Activated T-helper 2 cell treated with anti-CD3 and anti-CD28 coated beads, Interferon-gamma antibody, Interleukin-2, Interleukin-4, amounts not matched to agents 10 μg/mL and 5 μg/mL and 100 μg/mL, durations not matched to agents 14 hours and 24 hours and 36 hours (primary cell): ENCODE measurements at regions of chr12 and their contacts with region 1.

Region 1: DNA sequence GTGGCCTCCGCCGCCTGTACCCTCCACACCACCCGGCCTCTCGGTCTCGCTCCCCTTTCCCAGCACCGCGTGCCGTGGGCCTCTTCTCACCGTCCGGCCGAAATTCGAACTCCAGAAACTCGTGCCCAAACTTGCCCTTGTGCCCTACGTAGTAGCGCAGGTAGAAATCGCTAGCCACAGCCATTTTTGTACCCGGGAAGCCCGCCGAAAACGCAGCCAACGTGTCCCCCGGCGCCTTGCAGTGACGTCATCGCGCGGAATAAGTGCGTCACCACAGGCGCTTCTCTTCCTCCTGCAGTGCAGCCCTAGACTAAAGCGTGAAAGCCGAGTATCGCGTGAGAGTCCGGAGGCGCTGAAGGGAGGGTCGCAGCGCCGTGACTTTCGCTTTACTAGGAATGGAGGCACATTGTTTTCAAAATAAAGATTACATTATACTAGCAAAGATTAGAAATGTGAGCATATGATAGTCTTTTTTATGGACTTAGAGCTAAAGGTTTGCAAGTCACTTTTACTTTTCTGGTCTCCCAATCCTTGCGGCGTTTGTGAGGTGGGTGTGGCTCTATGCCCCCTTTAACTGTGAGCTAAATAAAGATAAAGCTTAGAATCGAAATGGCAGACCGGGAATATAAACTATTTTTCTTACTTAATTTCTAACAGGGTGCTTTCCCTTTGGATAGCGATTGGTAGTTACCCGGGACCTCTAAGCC is at the start of gene MAGOHB:
- DNase-seq: peak; percentile 97
- H3K4me3 Mint-ChIP-seq: peak within 1 kb of the TSS; percentile 100
- H3K27ac Mint-ChIP-seq: peak within 1 kb of the TSS; percentile 100
- H3K4me1 Mint-ChIP-seq: peaks cover 27% of the 10 kb centered on the region
- H3K27me3 Mint-ChIP-seq: peaks cover 11% of the 10 kb centered on the region
- total RNA-seq, gene MAGOHB: 69.4 and 70.2 TPM in 2 replicates

Region 2: GRCh38 chr12:9948606-9949296 is 664.8 kb before region 1 on chr12:
- intact Hi-C with region 1: loop called (anchors 5 kb)
- DNase-seq: no peak
- H3K4me3 Mint-ChIP-seq: peak overlapping the region; percentile 23
- H3K27ac Mint-ChIP-seq: peak overlapping the region; percentile 53
- H3K4me1 Mint-ChIP-seq: peaks cover 57% of the 10 kb centered on the region
- H3K27me3 Mint-ChIP-seq: no peaks in the 10 kb centered on the region

Region 3: DNA sequence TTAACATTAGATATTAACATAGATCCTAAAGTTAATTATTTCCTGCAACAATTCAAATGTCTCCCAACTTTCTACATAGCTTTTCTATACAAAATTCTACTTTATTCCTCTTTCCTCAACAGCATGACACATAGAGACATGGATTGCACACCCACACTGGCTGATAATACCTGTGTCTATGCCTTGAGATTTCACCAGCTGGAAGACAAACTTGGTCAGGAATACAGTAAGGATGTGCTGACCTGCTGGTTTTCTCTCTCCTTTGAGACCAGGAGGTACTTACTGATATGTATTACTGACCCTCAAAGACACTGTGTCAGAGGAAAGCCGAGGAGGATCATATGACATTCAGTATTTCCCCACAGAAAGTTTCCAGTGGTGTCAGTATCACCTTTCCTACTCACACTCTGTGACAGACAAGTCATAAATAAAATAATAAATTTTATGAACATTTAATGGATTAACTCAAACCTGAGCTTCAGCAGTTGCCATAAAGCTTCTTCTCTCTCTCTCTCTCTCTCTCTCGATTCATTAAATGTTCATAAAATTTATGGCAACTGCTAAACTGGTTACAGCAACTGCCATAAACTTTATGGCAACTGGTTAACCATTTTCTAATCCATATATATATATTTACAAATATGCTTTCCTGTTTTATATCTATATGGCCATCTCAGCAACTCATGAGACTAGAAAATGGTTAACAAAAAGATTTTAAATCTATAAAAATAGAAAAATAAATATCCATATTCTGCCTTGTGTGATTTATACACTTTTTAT is 85.1 kb before region 1 on chr12:
- intact Hi-C with region 1: no loop called
- DNase-seq: no peak
- H3K4me3 Mint-ChIP-seq: no peak overlapping the region
- H3K27ac Mint-ChIP-seq: no peak overlapping the region
- H3K4me1 Mint-ChIP-seq: no peaks in the 10 kb centered on the region
- H3K27me3 Mint-ChIP-seq: peaks cover 19% of the 10 kb centered on the region

Region 4: DNA sequence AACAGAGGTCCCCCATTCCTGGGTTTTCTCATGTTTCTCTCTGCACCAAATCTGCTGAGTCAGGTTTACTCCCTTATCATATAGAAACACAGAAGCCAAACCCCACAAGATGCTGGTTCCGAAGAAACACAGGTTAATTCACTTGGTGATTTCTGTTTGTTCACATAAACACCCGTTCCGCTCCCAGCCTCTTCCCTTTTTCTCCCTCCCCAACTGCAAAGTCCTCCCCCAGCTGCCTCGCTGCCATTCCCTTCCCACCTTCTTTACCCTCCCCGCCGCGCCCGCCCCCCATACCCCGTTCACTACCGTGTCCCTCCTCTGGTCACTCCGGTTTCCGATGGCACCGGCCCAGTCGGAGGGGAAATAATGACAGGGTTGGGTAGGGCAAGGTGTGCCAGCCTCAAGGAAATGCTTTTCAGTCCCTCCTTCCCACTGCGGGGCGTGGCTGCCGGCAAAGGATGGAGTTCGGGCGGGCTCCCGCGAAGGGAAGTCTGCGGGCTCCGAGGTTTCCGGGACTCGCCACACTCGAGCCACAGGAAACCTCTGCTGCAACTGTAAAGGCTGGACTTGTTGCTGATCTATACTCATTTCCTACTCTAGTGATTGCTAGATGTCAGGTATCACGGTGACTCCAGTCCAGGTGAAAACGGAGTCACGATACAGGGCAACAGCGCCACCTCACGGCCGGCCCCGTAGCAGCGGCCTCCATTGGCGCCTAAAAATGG is 60.3 kb after region 1 on chr12 and contains the start of gene STYK1:
- intact Hi-C with region 1: loop called (anchors 5 kb)
- DNase-seq: peak; percentile 71
- H3K4me3 Mint-ChIP-seq: peak within 1 kb of the TSS; percentile 70
- H3K27ac Mint-ChIP-seq: no peak within 1 kb of the TSS
- H3K4me1 Mint-ChIP-seq: peaks cover 39% of the 10 kb centered on the region
- H3K27me3 Mint-ChIP-seq: peaks cover 67% of the 10 kb centered on the region
- total RNA-seq, gene STYK1: not detected in 2 replicates

Region 5: GRCh38 chr12:10749700-10750384 is 136.3 kb after region 1 on chr12:
- intact Hi-C with region 1: loop called (anchors 2 kb)
- DNase-seq: peak; percentile 60
- H3K4me3 Mint-ChIP-seq: peak overlapping the region; percentile 38
- H3K27ac Mint-ChIP-seq: no peak overlapping the region
- H3K4me1 Mint-ChIP-seq: peaks cover 10% of the 10 kb centered on the region
- H3K27me3 Mint-ChIP-seq: peaks cover 43% of the 10 kb centered on the region

Region 6: DNA sequence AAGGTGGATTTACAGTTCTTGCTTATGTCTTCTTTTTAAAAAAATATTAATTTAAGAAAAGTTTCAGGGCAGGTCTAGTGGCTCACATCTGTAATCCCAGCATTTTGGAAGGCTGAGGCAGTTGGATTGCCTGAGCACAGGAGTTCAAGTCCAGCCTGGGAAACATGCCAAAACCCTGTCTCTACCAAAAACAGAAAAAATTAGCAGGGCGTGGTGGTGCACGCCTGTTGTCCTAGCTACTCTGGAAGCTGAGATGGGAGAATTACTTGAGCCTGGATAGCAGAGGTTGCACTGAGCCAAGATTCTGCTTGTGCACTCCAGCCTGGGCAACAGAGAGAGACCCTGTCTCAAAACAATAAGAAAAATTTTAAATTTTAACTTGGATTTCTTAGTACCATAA is 454.0 kb after region 1 on chr12:
- intact Hi-C with region 1: no loop called
- DNase-seq: no peak
- H3K4me3 Mint-ChIP-seq: no peak overlapping the region
- H3K27ac Mint-ChIP-seq: no peak overlapping the region
- H3K4me1 Mint-ChIP-seq: no peaks in the 10 kb centered on the region
- H3K27me3 Mint-ChIP-seq: no peaks in the 10 kb centered on the region

Region 7: GRCh38 chr12:11171145-11171968 is 557.9 kb after region 1 on chr12 and contains the start of gene SMIM10L1:
- intact Hi-C with region 1: loop called (anchors 2 kb)
- DNase-seq: peak; percentile 83
- H3K4me3 Mint-ChIP-seq: peak within 1 kb of the TSS; percentile 99
- H3K27ac Mint-ChIP-seq: peak within 1 kb of the TSS; percentile 99
- H3K4me1 Mint-ChIP-seq: peaks cover 53% of the 10 kb centered on the region
- H3K27me3 Mint-ChIP-seq: no peaks in the 10 kb centered on the region
- total RNA-seq, gene SMIM10L1: 10.7 and 10.8 TPM in 2 replicates